ENCODE measurements at regions of chr4 and their contacts with region 1.

Region 1: DNA sequence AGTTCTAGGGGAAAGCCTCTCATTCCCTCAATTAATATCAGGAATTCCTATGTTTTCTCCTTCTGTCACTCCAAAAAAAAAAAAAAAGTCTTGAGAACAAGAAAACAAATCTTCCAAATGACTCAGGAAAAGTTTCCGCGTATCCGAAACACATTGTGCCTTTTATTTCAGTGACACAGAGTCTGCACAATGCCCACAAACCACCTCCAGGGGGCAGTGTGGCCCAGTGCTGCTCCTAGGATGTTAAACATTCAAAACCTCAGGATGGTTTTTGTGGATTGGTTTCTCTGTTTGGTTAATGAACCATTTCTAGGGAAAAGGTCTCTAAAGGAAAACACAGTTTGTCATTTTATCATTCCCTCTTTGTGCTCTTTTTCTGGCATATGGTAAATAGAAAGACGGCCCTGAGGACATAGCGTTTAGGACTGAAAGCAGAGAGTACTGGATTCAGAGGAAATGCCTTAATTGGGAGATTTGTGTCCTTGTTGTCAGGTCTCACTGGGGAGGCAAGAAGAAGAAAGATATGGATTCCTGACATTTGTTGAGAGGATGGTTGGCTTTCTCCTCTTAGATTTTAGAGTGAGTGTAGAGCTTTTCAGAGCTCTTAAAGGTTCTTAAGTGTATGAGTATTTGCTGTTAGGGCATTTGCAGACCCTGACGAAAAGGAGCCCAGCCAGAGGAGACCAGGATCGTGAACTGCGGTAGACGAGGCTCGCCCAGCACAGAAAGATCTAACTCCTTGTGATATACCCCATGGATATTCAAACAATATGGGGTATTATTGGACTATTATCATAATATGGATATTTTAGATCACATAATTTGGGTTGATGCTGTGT is 65.7 kb upstream of the MAP9 start:
- DNase-seq: peak; percentile 81
- H3K4me3 Mint-ChIP-seq: peak overlapping the region; percentile 64
- H3K27ac Mint-ChIP-seq: peak overlapping the region; percentile 55
- H3K4me1 Mint-ChIP-seq: peaks cover 13% of the 10 kb centered on the region
- H3K27me3 Mint-ChIP-seq: no peaks in the 10 kb centered on the region
- CTCF ChIP-seq: peak; percentile 94

Region 2: GRCh38 chr4:155403886-155404285 is 38.6 kb before region 1 on chr4:
- CTCF ChIA-PET with region 1: interaction called, 6 read pairs
- POLR2A ChIA-PET with region 1: no interaction called
- intact Hi-C with region 1: loop called (anchors 2 kb)
- DNase-seq: peak; percentile 61
- H3K4me3 Mint-ChIP-seq: no peak overlapping the region
- H3K27ac Mint-ChIP-seq: no peak overlapping the region
- H3K4me1 Mint-ChIP-seq: no peaks in the 10 kb centered on the region
- H3K27me3 Mint-ChIP-seq: no peaks in the 10 kb centered on the region
- CTCF ChIP-seq: peak; percentile 56

Region 3: DNA sequence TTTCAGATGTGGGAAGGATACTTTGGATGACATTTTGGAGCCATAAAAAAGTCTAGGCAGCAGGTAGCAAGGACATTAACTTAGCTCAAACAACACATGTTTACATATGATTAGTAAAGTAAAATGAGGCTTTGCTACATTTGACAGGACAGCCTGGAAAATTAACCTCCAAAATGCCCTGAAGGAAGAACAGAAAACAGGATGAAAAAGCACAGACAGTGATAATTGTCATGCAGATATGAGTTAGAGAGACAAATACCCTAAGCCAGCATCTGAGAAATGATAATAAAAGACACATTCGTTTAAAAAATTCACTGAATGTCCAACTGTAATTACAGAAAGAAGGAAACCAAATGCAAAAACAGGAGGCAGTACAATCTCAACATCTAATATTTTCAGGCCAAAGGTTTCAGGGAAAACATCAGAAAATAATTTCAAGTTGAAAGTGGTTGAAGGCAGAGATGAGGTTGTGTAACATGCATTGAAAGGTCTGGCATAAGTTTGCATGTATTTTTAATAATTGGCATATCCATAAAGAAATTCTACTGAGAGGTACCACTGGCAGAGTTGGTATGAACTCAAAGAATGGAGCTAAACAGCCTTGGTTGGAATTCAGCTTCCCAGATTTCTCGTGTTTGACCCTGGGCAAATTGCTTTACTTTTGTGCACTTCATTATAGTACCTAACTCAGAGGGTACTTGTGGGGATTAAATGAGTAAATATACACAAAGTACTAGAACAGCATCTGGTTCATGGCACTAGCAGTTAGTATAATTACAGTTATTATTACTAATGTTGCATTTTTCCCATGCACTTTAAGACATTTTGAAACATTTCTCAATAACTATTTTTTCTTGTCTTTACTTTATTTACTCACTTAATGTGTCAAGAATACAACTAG is 11.3 kb before region 1 on chr4:
- CTCF ChIA-PET with region 1: interaction called, 18 read pairs
- POLR2A ChIA-PET with region 1: no interaction called
- intact Hi-C with region 1: no loop called
- DNase-seq: no peak
- H3K4me3 Mint-ChIP-seq: no peak overlapping the region
- H3K27ac Mint-ChIP-seq: no peak overlapping the region
- H3K4me1 Mint-ChIP-seq: peaks cover 6% of the 10 kb centered on the region
- H3K27me3 Mint-ChIP-seq: no peaks in the 10 kb centered on the region
- CTCF ChIP-seq: no peak

Region 4: DNA sequence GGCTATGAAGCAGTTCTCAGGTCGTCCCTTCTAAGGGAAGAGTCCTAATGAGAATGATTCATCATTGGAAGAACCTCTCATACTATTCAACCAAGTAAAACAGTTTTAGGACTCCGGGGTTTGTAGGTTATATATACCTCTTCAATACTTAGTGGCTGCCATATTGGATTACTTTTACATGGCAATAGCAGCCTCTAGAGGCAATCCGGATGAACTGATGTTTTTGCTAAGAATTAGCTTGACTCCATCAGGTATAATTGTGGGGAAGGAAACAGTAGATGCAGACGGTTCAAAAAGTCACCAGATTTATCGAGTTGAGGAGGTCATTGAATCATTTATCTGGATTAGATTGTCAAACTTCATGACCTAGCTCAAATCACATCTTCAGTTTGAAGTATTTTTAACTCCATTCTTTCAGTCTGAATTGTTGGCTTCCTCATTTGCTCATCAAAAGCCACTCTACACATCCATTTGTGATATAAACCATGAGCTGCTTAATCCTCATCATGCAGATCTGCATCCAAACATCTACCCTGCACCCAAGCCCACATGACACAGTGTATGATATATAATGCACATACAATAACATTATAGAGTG is 344.7 kb after region 1 on chr4:
- CTCF ChIA-PET with region 1: interaction called, 43 read pairs
- POLR2A ChIA-PET with region 1: interaction called, 5 read pairs
- intact Hi-C with region 1: loop called (anchors 1 kb)
- DNase-seq: peak; percentile 73
- H3K4me3 Mint-ChIP-seq: no peak overlapping the region
- H3K27ac Mint-ChIP-seq: no peak overlapping the region
- H3K4me1 Mint-ChIP-seq: peaks cover 5% of the 10 kb centered on the region
- H3K27me3 Mint-ChIP-seq: no peaks in the 10 kb centered on the region
- CTCF ChIP-seq: peak; percentile 74